Transverse colon (tissue), 4 donors: ENCODE measurements at regions of chr1 and their contacts with region 1.

Region 1: DNA sequence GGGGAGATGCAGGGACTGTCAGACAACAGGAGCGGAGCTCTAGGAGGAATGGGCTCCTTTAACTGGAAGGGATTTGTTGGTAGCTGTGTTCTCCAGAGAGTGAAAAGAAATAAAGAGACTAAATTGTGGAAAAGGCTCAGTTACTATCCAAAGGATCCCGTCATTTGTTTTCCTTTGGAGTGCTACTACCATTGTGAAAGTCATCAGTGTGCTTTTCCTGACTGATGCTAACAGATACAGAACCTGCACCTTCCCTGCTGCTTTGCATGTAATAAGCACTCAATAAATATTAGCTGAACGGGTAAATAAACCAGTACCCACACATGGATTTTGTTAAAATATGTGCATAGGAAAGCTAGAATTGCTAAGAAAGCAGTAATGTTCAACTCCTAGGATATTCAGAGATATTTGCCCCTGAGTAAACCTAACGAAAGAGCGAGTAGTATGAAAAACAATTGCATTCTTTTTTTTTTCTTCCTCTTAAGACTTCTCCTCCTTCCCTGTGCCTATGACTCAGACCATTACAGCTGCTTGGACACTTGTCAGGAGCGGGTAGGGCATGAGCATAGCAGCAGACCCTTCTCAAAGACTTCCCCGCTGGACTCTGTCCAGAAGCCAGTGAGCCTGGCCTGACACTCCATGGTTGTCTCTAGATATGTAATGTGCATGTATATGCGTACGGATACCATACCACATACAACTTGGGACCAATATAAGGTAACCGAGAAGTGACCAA is 41.7 kb downstream of the PTGFRN start:
- DNase-seq: peak; percentile 47
- H3K4me3 ChIP-seq: no peak overlapping the region
- H3K27ac ChIP-seq: peak overlapping the region; percentile 70 to 84 (median 74)
- H3K4me1 ChIP-seq: peaks cover 0 to 21% (median 11%) of the 10 kb centered on the region in 4 donors
- H3K27me3 ChIP-seq: no peaks in the 10 kb centered on the region
- CTCF ChIP-seq: no peak
- EP300 ChIP-seq: no peak
- POLR2A ChIP-seq: no peak

Region 2: DNA sequence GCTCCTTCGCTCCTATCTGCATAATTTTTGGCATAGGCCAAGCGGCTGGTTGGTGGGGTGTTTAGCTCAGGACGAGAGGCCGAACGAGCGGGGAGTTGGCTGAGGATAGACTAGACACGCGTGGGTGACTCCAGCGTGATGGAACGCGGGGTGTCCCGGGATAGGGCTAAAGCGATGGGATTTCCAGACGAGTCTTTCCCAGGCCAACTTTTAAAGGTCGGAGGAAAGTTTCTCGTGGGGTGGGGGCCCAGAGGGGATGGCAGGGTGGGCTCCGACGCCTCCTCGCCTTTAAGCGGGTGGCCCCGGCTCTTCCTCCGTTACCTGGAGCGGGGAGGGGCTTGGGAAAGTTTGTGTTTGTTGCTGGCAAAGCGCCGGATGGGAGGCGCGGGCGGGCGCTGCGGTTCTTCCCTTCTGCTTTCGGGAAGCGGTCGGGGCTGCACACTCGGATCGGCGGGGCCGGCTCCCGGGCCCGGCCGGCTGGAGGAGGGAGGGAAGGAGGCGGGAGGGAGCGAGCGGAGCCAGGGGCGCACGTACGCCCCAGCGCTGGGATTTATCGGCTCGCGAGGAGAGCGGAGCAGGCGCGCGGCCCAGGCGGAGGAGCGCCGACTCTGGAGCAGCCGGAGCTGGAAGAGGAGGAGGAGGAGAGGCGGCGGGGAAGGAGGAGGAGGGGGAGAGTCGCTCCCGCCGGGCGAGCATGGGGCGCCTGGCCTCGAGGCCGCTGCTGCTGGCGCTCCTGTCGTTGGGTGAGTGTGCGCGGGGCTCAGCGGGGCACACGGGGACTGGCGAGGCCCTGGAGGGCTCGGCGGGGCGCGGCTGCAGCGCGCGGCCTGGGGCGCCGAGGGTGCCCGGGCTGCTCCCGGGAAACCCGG is 41.6 kb before region 1 on chr1 and contains the start of gene PTGFRN:
- in situ Hi-C with region 1: no loop called
- intact Hi-C with region 1: loop called (anchors 5 kb)
- DNase-seq: peak; percentile 73
- H3K4me3 ChIP-seq: peak within 1 kb of the TSS; percentile 63 to 89 (median 75)
- H3K27ac ChIP-seq: peak within 1 kb of the TSS; percentile 83 to 94 (median 92)
- H3K4me1 ChIP-seq: peaks cover 7 to 37% (median 29%) of the 10 kb centered on the region in 4 donors
- H3K27me3 ChIP-seq: no peaks in the 10 kb centered on the region
- CTCF ChIP-seq: no peak
- EP300 ChIP-seq: no peak
- POLR2A ChIP-seq: peak; percentile 69
- total RNA-seq, gene PTGFRN: 39.6 to 98.9 (median 73.9) TPM